Breast epithelium (tissue), 4 donors: ENCODE measurements at regions of chr7 and their contacts with region 1.

Region 1: DNA sequence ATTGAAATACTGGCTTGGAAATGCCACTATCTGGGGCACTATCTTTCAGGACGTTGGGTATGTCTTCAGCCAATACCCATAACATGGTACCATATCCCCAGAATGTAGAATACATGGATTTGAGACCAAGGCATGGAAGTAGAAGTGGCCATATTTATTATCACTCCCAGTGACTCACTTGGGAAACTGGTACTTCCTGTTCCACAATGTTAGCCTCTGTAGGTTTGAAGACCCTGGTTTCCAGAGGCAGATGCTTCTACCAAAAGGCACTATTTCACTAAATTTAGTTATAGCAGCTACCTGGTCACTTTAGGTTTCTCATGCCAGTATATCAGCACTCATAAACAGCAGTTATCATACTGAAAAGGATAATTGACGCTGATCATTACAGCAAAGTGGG is 184.2 kb downstream of the CCDC71L start:
- DNase-seq: no peak
- H3K4me3 ChIP-seq: no peak overlapping the region
- H3K27ac ChIP-seq: no peak overlapping the region
- H3K4me1 ChIP-seq: no peaks in the 10 kb centered on the region
- H3K27me3 ChIP-seq: no peaks in the 10 kb centered on the region
- CTCF ChIP-seq: no peak
- POLR2A ChIP-seq: no peak

Region 2: DNA sequence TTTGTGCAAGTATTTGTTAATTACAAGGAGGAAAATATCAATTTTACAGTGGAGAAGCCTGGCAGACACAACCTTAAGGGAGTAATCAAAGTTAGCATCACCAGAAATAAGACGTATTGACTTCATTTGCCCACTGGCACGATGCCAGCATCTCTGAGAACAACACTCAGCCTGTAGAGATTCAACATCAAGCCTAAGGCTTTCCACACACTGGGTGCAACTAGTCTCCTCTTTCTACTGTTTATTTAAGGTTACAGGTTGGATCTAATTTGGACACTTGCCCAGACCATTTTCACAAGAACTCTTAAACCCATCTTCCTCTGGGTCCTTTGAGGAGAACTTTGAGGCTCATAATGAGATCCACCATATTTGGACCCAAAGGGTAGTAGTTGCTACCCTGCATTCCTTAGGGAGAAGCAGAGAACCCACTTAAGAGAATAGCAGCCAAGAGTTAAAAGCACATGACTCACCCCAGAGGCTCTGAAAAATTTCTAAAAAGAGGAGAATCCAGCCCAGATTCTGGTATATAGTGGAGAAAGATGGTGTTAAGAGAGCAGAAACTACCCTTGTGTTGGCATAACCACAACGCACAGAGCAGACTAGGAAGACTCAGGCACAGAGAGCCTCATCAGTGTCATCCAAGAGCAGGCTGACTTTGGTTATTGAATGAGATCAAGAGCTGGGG is 86.9 kb after region 1 on chr7:
- intact Hi-C with region 1: no loop called
- DNase-seq: no peak
- H3K4me3 ChIP-seq: no peak overlapping the region
- H3K27ac ChIP-seq: no peak overlapping the region
- H3K4me1 ChIP-seq: peaks cover 0 to 6% of the 10 kb centered on the region in 2 donors
- H3K27me3 ChIP-seq: no peaks in the 10 kb centered on the region
- CTCF ChIP-seq: no peak
- POLR2A ChIP-seq: no peak

Region 3: DNA sequence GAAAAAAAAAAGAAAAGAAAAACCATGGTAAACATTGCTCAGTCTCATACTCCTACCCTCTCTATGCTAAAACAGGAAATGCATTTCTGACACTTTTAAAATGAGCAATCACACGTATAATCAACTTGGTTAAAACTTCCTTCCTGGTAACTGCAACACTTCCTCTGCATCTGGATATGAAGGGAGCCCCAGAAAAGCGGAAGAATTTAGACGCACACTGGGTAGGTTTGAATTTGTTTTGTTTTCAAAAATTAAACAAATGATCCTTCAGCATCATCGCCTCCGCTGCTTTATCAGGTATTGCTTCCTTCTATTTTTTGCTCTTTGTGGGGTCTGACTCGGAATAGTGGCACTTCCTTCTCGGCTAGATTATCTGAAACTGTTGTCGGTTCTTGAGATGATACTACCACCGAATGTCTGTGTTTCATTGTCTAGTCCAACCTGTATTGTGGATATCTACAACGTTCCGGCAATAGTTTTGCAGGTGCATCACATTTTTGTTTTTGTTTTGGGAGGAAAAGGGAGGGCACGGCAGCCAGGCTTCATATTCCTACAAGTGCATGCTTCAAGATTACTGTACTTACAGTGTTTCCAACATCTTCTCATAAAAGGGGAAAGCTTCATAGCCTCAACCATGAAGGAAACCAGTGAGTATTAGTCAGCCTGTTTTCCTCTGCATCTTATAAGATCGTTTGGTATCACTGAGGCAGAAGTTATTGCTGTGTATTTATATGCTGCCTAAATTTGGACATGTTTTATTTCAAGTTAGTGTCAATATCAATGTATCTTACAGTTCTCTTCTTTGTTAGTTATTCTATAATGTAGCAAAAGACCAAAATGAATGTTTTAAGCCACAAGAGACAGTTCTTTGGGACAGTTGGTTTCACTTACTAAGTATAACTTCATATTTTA is 388.6 kb after region 1 on chr7 and contains the start of gene PIK3CG:
- intact Hi-C with region 1: no loop called
- DNase-seq: no peak
- H3K4me3 ChIP-seq: peak within 1 kb of the TSS; percentile 28 to 53 (median 38)
- H3K27ac ChIP-seq: peak within 1 kb of the TSS in 1 of 2 donors; percentile 58
- H3K4me1 ChIP-seq: no peaks in the 10 kb centered on the region
- H3K27me3 ChIP-seq: no peaks in the 10 kb centered on the region
- CTCF ChIP-seq: no peak
- POLR2A ChIP-seq: no peak
- total RNA-seq, gene PIK3CG: 3.3 to 12.0 (median 5.4) TPM

Region 4: DNA sequence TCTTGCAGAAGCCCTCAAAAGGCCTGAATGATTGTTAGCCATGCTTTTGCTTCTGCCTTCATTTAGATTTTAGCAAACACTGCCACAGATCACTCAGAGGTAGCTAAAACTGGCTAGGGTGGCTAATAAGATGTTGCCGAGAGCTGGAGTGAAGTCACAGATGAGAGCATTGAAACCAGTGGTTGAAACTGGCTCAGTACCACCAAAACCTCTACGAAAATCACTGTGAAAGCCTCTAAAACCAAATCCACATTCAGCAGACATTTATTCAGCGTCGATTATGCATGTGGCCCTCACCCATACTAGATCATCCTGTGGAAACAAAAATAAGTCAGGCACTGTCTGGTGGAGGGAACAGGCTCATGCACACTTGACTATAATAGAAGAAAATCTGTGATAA is 439.1 kb after region 1 on chr7:
- intact Hi-C with region 1: loop called (anchors 5 kb)
- DNase-seq: no peak
- H3K4me3 ChIP-seq: no peak overlapping the region
- H3K27ac ChIP-seq: no peak overlapping the region
- H3K4me1 ChIP-seq: no peaks in the 10 kb centered on the region
- H3K27me3 ChIP-seq: no peaks in the 10 kb centered on the region
- CTCF ChIP-seq: no peak
- POLR2A ChIP-seq: no peak